Activated CD4-positive, alpha-beta memory T cell treated with anti-CD3 and anti-CD28 coated beads for 36 hours (primary cell): ENCODE measurements at regions of chr12 and their contacts with region 1.

Region 1: GRCh38 chr12:27861428-27862167 is 81.6 kb upstream of the MANSC4 start:
- DNase-seq: peak; percentile 24
- H3K4me3 Mint-ChIP-seq: no peak overlapping the region
- H3K27ac Mint-ChIP-seq: no peak overlapping the region
- H3K4me1 Mint-ChIP-seq: peaks cover 20% of the 10 kb centered on the region
- H3K27me3 Mint-ChIP-seq: peaks cover under 1% of the 10 kb centered on the region

Region 2: GRCh38 chr12:27807063-27807703 is 54.4 kb before region 1 on chr12:
- CTCF ChIA-PET with region 1: no interaction called
- POLR2A ChIA-PET with region 1: no interaction called
- intact Hi-C with region 1: loop called (anchors 1 kb)
- DNase-seq: peak; percentile 56
- H3K4me3 Mint-ChIP-seq: peak overlapping the region; percentile 27
- H3K27ac Mint-ChIP-seq: no peak overlapping the region
- H3K4me1 Mint-ChIP-seq: peaks cover 28% of the 10 kb centered on the region
- H3K27me3 Mint-ChIP-seq: peaks cover 22% of the 10 kb centered on the region

Region 3: DNA sequence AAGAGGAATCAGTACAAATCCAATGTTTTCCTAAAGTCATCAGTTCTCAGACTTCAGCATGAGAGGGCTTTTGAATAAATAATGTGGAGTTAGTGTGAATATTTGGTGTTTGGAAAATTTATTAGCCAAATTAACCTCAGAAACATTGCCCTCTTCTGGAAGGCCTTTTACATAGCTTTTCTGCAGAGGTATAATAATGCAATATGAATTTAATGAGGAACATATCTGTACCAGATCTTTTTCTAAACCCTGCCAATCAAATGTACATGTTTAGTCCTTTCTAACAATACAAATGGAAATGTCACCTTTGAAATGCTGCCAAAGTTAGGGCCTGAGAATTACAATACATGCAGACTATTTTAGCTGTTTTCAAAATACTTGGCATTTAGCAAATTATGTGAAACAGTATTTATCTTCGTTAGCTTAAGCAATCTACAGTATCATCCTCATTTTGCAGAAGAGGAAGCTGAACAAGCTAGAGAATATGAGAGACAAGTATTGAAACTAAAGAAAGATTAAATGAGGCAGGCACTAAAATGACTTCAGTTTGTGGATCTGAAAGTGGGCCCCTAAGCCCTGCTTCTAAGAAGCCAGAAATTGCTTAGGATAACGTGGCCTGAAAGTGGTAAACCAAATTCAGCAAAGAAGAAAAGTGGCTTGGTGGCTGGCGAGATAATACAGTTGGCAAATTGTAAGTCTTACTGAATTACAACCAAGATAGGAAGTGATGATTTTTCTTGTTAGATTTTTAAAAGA is 21.2 kb before region 1 on chr12:
- CTCF ChIA-PET with region 1: no interaction called
- POLR2A ChIA-PET with region 1: no interaction called
- intact Hi-C with region 1: loop called (anchors 2 kb)
- DNase-seq: no peak
- H3K4me3 Mint-ChIP-seq: no peak overlapping the region
- H3K27ac Mint-ChIP-seq: no peak overlapping the region
- H3K4me1 Mint-ChIP-seq: no peaks in the 10 kb centered on the region
- H3K27me3 Mint-ChIP-seq: no peaks in the 10 kb centered on the region

Region 4: DNA sequence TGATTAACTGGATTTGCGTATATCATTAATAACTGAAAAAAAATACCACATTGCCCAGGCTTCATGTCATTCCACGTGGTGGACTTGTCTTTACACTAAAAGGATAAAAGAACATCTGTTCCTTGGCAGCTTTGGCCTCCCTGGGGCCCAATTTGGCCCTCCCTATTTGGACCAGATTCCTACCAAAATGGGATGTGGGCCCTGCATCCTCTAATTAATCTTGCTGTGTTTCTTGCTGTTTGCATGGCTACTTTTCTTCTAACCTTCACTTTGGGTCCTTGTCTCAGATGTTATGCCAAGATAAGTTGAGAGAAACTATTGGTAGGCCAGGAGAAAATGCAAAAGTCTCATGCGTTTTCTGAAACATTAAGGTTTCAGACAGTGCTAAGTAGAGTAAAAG is 53.4 kb after region 1 on chr12:
- CTCF ChIA-PET with region 1: no interaction called
- POLR2A ChIA-PET with region 1: no interaction called
- intact Hi-C with region 1: no loop called
- DNase-seq: no peak
- H3K4me3 Mint-ChIP-seq: no peak overlapping the region
- H3K27ac Mint-ChIP-seq: no peak overlapping the region
- H3K4me1 Mint-ChIP-seq: no peaks in the 10 kb centered on the region
- H3K27me3 Mint-ChIP-seq: peaks cover 6% of the 10 kb centered on the region

Region 5: DNA sequence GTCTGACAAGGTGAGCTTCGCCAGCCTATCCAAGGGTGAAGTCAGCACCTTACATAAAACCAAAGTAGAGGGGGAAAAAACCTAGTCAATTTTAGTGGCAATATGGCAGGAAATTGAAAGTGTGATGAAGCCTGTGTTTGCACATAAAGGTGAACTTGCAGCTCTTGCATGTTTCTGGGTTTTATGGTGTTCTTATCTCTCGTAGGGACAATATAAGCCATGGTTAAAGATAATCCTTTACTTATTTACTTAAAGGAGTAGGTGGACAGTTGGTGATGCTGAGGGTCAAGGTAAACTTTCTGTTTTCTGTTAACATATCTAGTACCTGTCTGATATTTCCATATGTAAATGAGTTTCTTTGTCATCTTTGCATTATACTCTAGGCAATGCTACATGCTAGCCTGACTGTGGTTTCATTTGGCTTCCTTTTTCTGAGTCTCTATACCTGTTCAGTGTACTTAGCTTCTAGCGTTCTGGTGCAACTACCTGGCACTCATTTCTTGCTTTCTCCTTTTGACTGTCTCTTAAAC is 361.5 kb after region 1 on chr12:
- CTCF ChIA-PET with region 1: no interaction called
- POLR2A ChIA-PET with region 1: no interaction called
- intact Hi-C with region 1: loop called (anchors 5 kb)
- DNase-seq: peak; percentile 16
- H3K4me3 Mint-ChIP-seq: peak overlapping the region; percentile 42
- H3K27ac Mint-ChIP-seq: peak overlapping the region; percentile 76
- H3K4me1 Mint-ChIP-seq: peaks cover 45% of the 10 kb centered on the region
- H3K27me3 Mint-ChIP-seq: no peaks in the 10 kb centered on the region